Cardiac septum (tissue), 1 donor: ENCODE measurements at regions of chr1 and their contacts with region 1.

Region 1: DNA sequence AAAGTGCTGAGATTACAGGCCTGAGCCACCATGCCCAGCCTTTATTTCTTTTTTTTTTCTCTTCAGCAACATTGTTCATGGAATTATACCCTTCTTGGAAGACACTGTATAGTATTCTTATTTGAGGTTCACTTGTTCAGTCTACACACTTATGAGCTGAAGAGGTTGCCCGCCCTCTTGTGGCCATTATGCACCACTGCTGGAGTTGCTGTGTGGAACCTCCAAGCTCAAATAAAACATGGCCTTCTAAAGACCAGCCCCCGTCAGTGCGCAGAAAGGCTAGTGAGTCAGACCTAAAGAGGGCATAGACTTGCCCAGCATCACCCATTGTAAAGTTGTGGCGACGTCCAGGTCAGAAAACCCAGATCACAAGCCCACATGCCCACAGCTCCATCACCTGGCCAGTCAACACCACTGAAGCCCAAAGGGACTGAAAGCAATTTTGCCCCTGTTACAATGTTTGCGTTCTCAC is 20.4 kb downstream of the LURAP1 start:
- DNase-seq: no peak

Region 2: DNA sequence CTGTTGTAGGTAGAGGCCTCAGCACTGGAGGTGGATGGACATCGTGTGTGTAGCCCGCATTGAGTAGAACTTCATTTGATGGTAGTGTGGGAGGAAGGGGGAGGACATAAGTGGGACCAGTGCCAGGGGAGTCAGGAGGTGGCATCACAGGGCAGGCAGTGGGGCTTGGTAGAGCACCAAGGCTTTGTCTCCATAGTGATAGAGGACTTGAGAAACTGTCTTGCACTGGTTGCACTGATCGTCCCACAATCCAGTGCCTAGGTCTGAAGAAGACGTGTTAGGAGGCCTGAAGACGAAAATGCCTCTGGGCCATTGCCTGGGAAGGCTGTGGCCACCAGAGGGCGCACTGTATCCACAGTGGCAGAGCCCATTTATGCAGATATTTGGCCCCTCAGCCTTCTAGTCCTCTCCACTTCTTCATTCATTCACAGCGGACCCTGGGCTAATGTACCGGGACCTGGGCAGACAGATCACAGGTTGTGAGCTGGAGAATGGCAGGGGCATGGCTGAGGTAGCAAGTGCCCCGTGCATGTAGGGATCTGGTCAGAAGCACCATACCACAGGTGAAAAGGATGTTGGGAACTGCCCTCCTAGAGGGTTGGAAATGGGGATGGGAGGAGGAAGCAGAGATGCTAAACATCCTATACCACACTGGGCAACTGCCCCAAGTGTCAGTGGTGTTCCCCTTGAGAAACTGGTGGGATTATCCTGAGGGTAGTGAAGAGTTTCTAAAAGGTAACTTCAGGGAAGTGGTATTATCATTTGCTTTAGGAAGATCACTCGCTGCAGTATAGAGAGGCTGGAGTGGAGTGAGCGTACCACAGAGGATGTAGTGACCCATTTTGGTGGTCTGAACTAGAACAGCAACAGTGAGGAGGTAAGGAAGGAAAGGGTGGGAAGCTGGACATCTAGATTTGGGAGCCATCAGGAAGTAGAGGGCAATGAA is 186.3 kb before region 1 on chr1:
- intact Hi-C with region 1: loop called (anchors 2 kb)
- DNase-seq: peak; percentile 90

Region 3: DNA sequence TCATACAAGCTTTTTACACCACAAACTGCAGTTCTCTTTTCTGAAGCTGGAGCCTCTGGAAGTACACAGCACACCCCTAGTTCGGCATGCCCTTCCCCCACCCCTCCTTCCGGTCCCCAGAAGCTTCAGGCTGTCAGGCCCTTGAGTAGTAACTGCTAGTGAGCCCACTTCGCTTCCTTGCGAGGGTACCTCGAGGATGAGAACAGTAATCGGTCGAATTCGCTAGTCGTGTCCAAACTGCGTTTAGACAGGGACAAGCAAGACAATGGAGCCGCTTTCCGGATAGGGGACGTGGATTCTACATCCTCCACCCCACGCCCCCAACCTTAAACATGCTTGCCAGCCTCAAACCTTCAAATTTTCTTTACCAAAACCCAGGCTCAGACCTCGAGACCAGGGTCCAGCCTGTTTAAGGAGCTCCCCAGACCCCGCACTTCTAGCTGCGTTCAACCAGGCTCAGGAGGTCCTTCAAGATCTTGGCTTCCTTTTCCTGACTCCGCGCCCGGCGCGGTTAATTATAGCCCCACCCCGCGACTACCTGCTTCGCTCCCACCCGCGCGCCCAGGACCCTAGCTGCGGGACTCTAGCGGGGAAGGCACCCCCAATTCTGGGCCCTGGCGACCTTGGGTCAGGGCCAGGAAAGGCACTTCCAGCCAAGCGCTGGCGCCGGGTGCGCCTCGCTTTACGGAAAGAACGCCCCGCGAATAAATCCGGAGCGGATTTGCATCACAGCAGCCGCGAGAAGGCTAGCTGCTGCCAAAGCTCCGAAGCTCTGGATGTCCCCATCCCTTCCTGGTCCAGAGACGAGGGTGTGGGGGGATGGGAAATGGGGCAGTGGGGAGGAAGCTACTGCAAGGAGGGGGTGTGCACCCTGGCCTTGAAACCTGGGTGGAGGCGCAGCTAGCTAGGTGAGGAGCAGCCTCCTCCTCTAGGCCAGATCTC is 56.7 kb before region 1 on chr1:
- intact Hi-C with region 1: no loop called
- DNase-seq: peak; percentile 83